ENCODE measurements at regions of chr3 and their contacts with region 1.

Region 1: GRCh38 chr3:195692354-195692685 is 28.5 kb upstream of the MUC20 start:
- DNase-seq: no peak
- ATAC-seq: no peak
- H3K4me3 ChIP-seq: no peak overlapping the region
- H3K27ac ChIP-seq: no peak overlapping the region
- H3K4me1 ChIP-seq: no peaks in the 10 kb centered on the region
- H3K27me3 ChIP-seq: no peaks in the 10 kb centered on the region

Region 2: GRCh38 chr3:193910886-193911738 is 1781.2 kb before region 1 on chr3:
- intact Hi-C with region 1: no loop called
- DNase-seq: peak in 2 of 3 donors; percentile 29 to 69
- ATAC-seq: peak; percentile 55 to 60
- H3K4me3 ChIP-seq: no peak overlapping the region
- H3K27ac ChIP-seq: no peak overlapping the region
- H3K4me1 ChIP-seq: peaks cover 2% of the 10 kb centered on the region
- H3K27me3 ChIP-seq: no peaks in the 10 kb centered on the region

Region 3: DNA sequence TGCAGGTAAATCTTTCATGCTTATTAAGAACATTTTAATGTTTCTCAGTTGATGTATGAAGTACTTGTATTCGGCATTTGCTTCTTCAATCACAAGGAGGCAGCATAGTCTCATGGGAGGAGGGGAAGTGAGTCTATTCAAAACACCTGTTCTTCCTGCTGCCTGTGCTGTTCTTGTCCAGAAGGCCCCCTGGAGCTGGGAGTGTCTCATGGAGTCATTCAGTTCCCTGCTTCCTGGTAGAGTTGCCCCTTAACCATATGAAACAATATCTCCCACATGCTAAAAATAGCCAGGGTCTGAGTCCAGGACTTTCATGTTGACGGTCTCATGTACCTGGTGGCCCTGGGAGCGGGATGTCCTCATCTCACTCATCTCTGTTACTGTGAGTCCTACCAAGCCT is 133.7 kb before region 1 on chr3:
- intact Hi-C with region 1: no loop called
- DNase-seq: no peak
- ATAC-seq: peak in 1 of 2 donors; percentile 41
- H3K4me3 ChIP-seq: no peak overlapping the region
- H3K27ac ChIP-seq: no peak overlapping the region
- H3K4me1 ChIP-seq: no peaks in the 10 kb centered on the region
- H3K27me3 ChIP-seq: no peaks in the 10 kb centered on the region

Region 4: GRCh38 chr3:195596765-195597171 is 95.6 kb before region 1 on chr3:
- intact Hi-C with region 1: no loop called
- DNase-seq: no peak
- ATAC-seq: peak in 1 of 2 donors; percentile 31
- H3K4me3 ChIP-seq: no peak overlapping the region
- H3K27ac ChIP-seq: no peak overlapping the region
- H3K4me1 ChIP-seq: peaks cover 2% of the 10 kb centered on the region
- H3K27me3 ChIP-seq: no peaks in the 10 kb centered on the region

Region 5: DNA sequence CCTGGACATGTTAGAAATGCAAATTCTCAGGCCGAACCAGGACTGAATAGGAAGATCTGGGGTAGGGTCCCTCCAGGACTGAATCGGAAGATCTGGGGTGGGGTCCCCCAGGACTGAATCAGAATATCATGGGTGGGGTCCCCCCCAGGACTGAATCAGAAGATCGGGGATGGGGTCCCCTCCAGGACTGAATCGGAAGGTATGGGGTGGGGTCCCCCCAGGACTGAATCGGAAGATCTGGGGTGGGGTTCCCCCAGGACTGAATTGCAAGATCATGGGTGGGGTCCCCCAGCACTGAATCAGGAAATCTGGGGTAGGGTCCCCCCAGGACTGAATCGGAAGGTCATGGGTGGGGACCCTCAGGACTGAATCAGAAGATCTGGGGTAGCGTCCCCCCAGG is 264.3 kb after region 1 on chr3:
- intact Hi-C with region 1: loop called in 1 of 4 experiments (anchors 5 kb)
- DNase-seq: peak in 1 of 3 donors; percentile 28
- ATAC-seq: no peak
- H3K4me3 ChIP-seq: no peak overlapping the region
- H3K27ac ChIP-seq: no peak overlapping the region
- H3K4me1 ChIP-seq: no peaks in the 10 kb centered on the region
- H3K27me3 ChIP-seq: no peaks in the 10 kb centered on the region

Measured in right cardiac atrium (tissue), 5 donors.